ENCODE measurements at regions of chr16 and their contacts with region 1.

Region 1: GRCh38 chr16:47037746-47038458 is 64.4 kb upstream of the DNAJA2 start:
- DNase-seq: peak; percentile 95
- CTCF ChIP-seq: peak; percentile 96

Region 2: DNA sequence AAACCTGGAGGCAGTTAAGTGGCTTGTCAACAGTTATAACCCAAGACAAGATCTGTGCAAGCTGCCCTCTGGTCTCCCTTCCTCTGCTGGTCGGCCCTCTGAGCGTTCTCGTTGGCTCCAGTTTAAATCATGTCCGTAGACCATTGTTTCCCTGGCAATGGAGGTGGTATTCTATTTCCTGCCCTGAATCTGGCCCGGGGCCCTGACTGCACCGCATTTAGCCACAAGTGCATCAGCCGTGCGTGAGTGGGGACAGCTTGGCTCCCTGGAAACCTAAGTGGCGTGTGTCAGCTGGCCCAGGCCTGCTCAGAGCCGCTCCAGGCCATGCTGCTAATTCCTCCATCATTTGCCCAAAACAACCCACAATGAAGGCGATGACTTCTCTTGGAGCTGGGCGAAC is 274.8 kb before region 1 on chr16:
- CTCF ChIA-PET with region 1: no interaction called
- POLR2A ChIA-PET with region 1: no interaction called
- DNase-seq: no peak
- CTCF ChIP-seq: no peak

Region 3: GRCh38 chr16:46947900-46948547 is 89.9 kb before region 1 on chr16:
- CTCF ChIA-PET with region 1: interaction called, 10 read pairs
- POLR2A ChIA-PET with region 1: interaction called, 3 read pairs
- DNase-seq: peak; percentile 64
- CTCF ChIP-seq: peak; percentile 37

Region 4: GRCh38 chr16:47018223-47018891 is 19.5 kb before region 1 on chr16:
- CTCF ChIA-PET with region 1: interaction called, 25 read pairs
- POLR2A ChIA-PET with region 1: interaction called, 6 read pairs
- DNase-seq: peak; percentile 88
- CTCF ChIP-seq: peak; percentile 70

Region 5: DNA sequence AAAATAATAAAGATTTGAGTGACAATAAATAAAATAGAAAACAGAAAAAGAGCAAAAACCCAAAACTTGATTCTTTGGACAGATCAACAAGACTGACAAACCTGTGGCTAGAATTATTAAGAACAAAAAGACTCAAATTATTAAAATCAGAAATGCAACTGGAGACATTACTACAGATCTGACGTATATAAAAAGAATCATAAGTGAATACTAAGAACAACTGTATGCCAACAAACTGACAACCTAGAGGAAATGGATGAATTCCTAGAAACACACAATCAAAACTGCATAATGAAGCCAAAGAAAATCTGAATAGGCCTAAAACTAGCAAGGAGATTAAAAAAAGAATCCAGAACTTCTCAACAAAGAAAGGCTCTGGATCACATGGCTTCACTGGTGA is 58.4 kb after region 1 on chr16:
- CTCF ChIA-PET with region 1: interaction called, 11 read pairs
- POLR2A ChIA-PET with region 1: no interaction called
- DNase-seq: no peak
- CTCF ChIP-seq: no peak

Region 6: DNA sequence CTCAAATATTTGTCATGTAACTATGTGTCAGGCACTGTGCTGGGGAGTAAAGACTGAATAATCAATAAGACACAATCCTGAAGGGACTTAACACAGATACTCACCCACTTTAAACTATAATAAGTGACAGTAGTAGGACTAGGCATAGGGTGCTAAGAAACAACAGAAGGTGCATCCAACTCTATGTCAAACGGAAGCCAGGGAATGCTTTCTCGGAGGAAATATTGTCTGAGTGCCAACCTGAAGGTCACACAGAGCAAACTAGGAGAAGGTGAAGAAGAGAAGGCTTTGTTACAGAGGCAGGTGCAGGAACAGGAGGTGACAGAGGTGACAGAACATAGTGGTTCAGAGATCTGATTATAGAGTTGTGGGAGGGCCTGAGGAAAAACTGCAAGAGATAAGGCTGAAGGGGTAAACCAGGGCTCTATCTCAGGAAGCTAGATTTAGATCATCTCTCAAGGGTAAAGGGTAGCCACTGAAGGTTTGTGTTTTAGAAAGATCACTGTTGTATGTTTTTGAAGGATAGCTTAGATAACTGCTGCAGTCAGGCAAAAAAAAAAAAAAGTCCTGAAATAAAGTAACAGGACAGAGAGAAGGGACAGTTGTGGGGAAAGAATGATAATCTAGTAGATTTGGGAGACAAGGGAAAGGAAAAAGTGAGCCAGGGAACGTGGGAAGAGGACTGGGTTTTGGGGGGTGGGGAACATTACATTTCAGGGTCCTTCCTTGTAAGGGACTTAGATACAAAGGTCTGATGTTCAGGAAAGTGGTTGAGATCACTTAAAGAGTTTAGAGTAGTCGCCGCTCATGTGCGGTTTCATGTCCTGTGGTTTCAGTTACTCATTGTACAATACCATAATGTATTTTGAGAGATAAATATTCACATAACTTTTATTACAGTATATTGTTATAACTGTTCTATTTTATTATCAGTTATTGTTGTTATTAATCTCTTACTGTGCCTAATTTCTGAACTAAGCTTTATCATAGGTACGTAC is 191.4 kb after region 1 on chr16:
- CTCF ChIA-PET with region 1: no interaction called
- POLR2A ChIA-PET with region 1: no interaction called
- DNase-seq: no peak
- CTCF ChIP-seq: no peak

Region 7: DNA sequence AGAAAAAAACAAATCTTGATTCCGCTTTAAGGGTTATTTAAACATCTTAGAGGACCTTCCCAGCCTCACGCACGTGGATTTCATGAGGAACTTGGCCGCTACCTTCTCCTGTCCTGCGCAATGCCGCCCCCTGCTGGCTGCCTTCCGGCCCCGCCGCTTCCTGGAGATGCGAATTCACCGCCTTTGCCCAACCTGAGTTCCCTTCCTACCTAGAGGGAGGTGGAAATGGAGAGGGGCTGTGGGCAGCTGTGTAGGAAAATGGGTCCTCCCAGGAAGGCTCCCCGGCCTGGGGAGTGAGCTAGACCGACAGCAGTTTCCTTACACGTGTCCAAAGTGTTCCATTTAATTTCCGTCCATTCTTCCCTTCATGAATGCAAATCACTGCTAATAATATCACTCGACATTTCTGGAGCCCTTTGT is 1118.9 kb after region 1 on chr16:
- CTCF ChIA-PET with region 1: interaction called, 18 read pairs
- POLR2A ChIA-PET with region 1: no interaction called
- DNase-seq: peak; percentile 80
- CTCF ChIP-seq: peak; percentile 98

Measured in GM10248 (cell line).